ENCODE measurements at regions of chr1 and their contacts with region 1.

Region 1: GRCh38 chr1:89037186-89037585 is 14.5 kb upstream of the GBP3 start:
- DNase-seq: no peak
- ATAC-seq: no peak
- H3K4me3 ChIP-seq: no peak overlapping the region
- H3K4me3 Mint-ChIP-seq: no peak overlapping the region
- H3K27ac ChIP-seq: no peak overlapping the region
- H3K27ac Mint-ChIP-seq: no peak overlapping the region
- H3K4me1 ChIP-seq: peaks cover 3 to 14% of the 10 kb centered on the region in 2 experiments
- H3K4me1 Mint-ChIP-seq: peaks cover 61 to 68% (median 66%) of the 10 kb centered on the region in 3 donors
- H3K27me3 ChIP-seq: no peaks in the 10 kb centered on the region
- H3K27me3 Mint-ChIP-seq: no peaks in the 10 kb centered on the region

Region 2: GRCh38 chr1:89286549-89287180 is 249.5 kb after region 1 on chr1:
- CTCF ChIA-PET with region 1: no interaction called
- POLR2A ChIA-PET with region 1: interaction called in 1 of 2 experiments, 17 read pairs
- DNase-seq: peak in 1 of 35 experiments; percentile 53
- ATAC-seq: peak; percentile 85 to 87 (median 86)
- H3K4me3 ChIP-seq: peak overlapping the region; percentile 11 to 22
- H3K4me3 Mint-ChIP-seq: peak overlapping the region; percentile 54 to 75 (median 55)
- H3K27ac ChIP-seq: peak overlapping the region; percentile 79
- H3K27ac Mint-ChIP-seq: peak overlapping the region; percentile 94 to 99
- H3K4me1 ChIP-seq: peaks cover 31 to 51% of the 10 kb centered on the region in 2 experiments
- H3K4me1 Mint-ChIP-seq: peaks cover 64 to 76% (median 75%) of the 10 kb centered on the region in 3 donors
- H3K27me3 ChIP-seq: no peaks in the 10 kb centered on the region
- H3K27me3 Mint-ChIP-seq: no peaks in the 10 kb centered on the region

Region 3: GRCh38 chr1:89429062-89429461 is 391.9 kb after region 1 on chr1:
- CTCF ChIA-PET with region 1: no interaction called
- POLR2A ChIA-PET with region 1: no interaction called
- DNase-seq: no peak
- ATAC-seq: no peak
- H3K4me3 ChIP-seq: no peak overlapping the region
- H3K4me3 Mint-ChIP-seq: no peak overlapping the region
- H3K27ac ChIP-seq: no peak overlapping the region
- H3K27ac Mint-ChIP-seq: no peak overlapping the region
- H3K4me1 ChIP-seq: no peaks in the 10 kb centered on the region
- H3K4me1 Mint-ChIP-seq: no peaks in the 10 kb centered on the region
- H3K27me3 ChIP-seq: peaks cover 0 to 3% of the 10 kb centered on the region in 2 experiments
- H3K27me3 Mint-ChIP-seq: no peaks in the 10 kb centered on the region

Measured in T-cell (primary cell).